HEK293 (cell line): ENCODE measurements at regions of chr6 and their contacts with region 1.

Region 1: DNA sequence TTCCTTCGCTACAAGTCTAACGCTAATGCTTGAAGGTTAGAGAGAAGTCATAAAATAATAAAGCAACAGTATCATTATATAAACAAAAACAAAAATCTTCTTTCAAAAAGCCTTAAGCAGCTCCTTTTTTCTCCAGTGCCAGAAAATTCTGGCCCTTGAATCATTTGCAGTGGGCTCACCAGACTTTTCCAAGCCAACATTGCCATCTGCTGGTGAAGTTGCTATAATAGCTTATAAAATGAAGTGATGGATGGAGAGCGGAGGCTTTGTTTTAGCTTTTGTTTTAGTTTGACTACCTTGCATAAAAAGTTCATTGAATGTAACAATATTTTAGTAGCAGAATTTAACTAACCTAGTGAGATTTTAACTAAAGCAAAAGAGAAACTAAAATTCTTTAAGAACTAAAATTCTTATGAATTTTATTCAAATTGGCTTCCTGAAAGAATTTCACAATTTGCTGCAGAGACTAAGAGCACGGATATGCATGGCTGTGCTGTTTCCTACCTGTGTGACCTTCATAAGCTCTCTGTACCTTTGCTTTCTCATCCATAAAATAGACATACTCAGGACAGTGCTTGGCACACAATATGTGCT is 44.8 kb upstream of the SLC2A12 start:
- H3K4me3 ChIP-seq: no peak overlapping the region
- H3K27ac ChIP-seq: no peak overlapping the region
- H3K4me1 ChIP-seq: no peaks in the 10 kb centered on the region
- CTCF ChIP-seq: peak; percentile 32; the same call in 1 of the 2 replicates

Region 2: DNA sequence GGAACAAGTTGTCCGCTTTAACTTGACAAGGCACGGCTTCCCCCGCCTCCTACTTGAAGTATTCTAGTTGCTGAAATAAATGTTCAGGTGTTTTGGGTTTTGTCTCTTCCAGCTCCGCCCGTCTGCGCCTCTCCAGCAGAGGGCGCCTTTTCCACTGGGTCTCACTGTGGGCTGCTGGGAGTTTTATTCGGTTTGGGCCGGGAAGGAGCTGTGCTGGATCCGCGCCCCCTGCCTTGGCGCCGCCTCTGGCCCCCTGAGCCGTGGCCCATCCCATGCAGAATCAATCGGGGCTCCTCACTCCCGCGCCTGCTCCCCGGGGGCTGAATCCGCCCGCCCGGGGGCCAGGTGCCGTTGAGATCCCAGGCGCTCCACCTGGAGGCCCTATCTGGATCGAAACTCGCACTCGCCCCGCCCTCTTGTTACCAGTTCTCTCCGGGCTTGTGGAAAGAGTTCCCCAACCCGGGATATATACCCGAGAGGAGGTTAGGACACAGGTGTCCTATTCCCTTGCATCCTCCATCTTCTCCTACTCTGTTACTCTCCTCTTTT is 259.3 kb before region 1 on chr6:
- CTCF ChIA-PET with region 1: interaction called, 11 read pairs
- POLR2A ChIA-PET with region 1: no interaction called
- H3K4me3 ChIP-seq: peak overlapping the region; percentile 57
- H3K27ac ChIP-seq: peak overlapping the region; percentile 36; the same call in 1 of the 2 replicates
- H3K4me1 ChIP-seq: no peaks in the 10 kb centered on the region
- CTCF ChIP-seq: peak; percentile 96

Region 3: GRCh38 chr6:133952815-133953633 is 144.2 kb before region 1 on chr6 and contains the start of gene TBPL1:
- CTCF ChIA-PET with region 1: interaction called, 16 read pairs
- POLR2A ChIA-PET with region 1: no interaction called
- H3K4me3 ChIP-seq: peak within 1 kb of the TSS; percentile 98
- H3K27ac ChIP-seq: peak within 1 kb of the TSS; percentile 70
- H3K4me1 ChIP-seq: peaks cover 18% of the 10 kb centered on the region
- CTCF ChIP-seq: no peak

Region 4: DNA sequence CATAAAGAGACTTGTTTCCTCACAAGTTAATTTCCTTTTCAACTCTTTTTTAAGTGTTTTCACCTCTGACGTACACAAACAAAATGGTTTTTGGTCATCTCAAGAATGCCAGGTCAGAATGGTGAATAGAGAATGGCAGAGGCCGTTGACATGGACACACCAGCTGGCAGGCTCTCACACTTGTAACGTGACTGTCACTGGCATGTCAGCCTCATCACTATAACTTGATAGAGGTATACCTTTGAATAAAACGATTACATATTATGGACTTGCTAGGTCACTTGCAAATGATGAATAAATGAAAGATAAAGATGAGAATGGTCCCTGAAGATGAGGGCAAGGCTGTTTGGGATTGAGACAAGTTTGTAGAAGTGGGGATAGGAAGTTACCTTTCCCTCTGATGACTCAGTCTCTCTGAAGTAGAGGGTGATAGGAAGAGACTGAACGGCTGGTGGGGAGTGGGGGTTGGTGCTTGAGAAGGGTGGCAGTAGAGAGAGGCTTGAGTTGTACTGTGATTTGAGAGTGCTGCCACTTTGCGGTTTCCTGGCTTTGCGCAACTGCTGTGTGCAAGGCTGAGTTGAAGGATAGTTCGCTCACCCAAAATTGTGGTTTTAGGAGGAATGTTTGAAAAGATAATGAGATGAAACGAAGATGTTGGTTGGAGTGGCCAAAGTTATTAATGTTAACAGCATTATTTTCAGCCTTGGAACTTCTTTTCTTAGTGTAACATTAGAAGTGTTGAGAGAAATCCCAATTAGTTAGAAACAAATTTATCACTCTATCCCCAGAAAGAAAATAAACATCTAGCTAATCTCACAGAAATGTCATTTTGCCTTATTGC is 113.9 kb before region 1 on chr6:
- CTCF ChIA-PET with region 1: interaction called, 27 read pairs
- POLR2A ChIA-PET with region 1: no interaction called
- H3K4me3 ChIP-seq: no peak overlapping the region
- H3K27ac ChIP-seq: no peak overlapping the region; the same call in 1 of the 2 replicates
- H3K4me1 ChIP-seq: peaks cover 22% of the 10 kb centered on the region
- CTCF ChIP-seq: peak; percentile 68; the same call in 1 of the 2 replicates

Region 5: DNA sequence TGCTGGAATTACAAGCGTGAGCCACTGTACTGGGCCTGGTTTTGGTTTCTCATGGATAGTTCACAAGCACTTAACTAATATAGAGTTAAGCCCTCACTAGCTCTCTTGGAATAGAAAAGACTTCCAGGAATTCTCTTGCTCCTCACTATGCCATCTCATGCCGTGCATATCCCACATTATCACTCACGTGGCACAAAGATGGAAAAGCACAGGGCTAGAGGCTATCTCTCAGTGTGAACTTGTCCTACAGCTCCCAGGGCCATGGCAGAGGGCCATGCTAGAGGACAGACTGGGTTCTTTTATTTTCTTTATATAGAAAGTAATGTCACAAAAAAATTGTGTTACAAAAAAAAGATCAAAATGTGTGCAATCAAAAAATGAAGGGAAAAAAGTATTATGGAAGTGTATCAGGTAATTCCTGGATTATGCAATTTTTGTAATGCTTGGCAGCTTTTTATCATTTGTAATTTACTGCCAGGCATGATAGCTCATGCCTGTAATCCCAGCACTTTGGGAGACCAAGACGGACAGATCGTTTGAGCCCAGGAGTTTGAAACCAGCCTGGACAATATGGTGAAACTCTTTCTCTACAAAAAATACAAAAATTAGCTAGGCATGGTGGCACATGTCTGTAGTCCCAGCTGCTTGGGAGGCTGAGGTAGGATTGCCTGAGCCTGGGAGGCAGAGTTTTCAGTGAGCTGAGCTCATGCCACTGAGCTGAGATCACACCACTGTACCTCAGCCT is 38.4 kb before region 1 on chr6:
- CTCF ChIA-PET with region 1: interaction called, 127 read pairs
- POLR2A ChIA-PET with region 1: interaction called, 8 read pairs
- H3K4me3 ChIP-seq: no peak overlapping the region
- H3K27ac ChIP-seq: no peak overlapping the region
- H3K4me1 ChIP-seq: no peaks in the 10 kb centered on the region; the same call in 1 of the 2 replicates
- CTCF ChIP-seq: no peak

Region 6: DNA sequence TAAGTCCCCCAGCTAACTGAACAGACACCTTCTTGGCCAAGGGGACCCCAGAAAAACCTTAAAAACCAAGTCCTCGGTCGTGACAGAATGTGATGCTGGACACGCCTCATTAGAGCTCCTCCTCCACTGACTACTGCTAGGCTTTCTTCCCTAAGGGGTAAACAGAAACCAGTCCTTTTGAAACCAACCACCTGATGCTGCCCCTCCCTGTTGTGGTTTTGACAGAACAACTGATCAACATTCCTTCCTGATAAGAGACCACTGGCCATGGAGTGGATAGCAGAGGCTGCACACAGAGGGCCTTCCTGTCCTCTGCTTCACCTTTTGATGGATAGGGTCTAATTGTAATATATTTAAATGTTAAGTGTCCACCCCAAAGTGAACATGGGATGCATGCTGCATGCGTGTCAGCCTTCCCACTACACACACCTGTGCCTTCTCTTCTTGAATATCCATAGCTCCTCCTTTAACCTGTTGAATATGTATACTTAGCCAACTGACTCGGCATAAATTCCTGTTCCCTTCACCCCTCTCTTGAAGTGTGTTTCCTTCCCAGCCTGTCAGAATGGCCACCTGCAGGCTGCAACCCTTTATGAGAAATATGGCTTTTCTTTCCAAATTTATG is 16.9 kb before region 1 on chr6:
- CTCF ChIA-PET with region 1: interaction called, 35 read pairs
- POLR2A ChIA-PET with region 1: no interaction called
- H3K4me3 ChIP-seq: no peak overlapping the region
- H3K27ac ChIP-seq: no peak overlapping the region
- H3K4me1 ChIP-seq: peaks cover 11% of the 10 kb centered on the region; the same call in 1 of the 2 replicates
- CTCF ChIP-seq: no peak

Region 7: GRCh38 chr6:134216301-134217010 is 119.2 kb after region 1 on chr6:
- CTCF ChIA-PET with region 1: no interaction called
- POLR2A ChIA-PET with region 1: no interaction called
- H3K4me3 ChIP-seq: no peak overlapping the region
- H3K27ac ChIP-seq: no peak overlapping the region
- H3K4me1 ChIP-seq: no peaks in the 10 kb centered on the region
- CTCF ChIP-seq: no peak